ENCODE measurements at regions of chr13 and their contacts with region 1.

Region 1: DNA sequence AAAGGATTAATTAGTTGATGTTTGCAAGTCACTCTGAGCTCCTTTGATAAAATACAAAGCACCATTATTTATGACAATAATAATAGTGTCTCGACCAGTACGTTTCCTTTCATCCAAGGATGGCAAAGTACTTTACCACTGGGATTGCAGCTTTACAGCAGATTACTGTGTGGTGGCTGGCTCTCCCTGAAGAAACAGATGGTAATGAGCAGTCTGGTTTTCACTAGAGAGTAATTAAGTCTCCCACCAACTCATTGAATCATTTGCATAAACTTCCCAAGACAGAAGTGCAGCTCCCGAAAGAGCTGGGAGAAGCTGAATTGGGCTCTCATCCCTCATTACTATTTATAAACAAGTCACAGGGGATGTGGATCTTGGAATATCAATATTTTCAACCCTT is 48.7 kb downstream of the KLF5 start:
- DNase-seq: no peak
- H3K4me3 Mint-ChIP-seq: peak overlapping the region; percentile 30
- H3K27ac Mint-ChIP-seq: peak overlapping the region; percentile 90
- H3K4me1 Mint-ChIP-seq: peaks cover 21% of the 10 kb centered on the region
- H3K27me3 Mint-ChIP-seq: no peaks in the 10 kb centered on the region
- CTCF ChIP-seq: no peak

Region 2: DNA sequence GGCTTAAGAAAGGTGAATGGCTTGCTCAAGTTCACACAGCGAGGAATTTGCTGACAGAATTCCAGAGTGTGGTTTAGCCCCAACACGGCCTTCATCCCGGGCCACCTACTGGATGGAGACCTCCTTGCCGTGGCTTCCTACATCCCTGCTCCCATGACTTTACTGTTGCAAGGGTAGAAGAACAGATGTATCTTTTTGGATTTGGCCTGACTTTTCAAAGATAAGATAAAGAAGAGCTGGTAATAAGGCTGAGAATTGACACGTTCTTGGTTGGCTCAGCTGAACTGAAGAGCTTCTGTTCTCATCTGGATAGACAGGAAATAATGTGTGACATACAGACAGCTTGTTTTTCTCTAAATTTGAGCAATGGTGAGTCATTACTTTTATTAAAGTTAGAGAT is 64.4 kb after region 1 on chr13:
- CTCF ChIA-PET with region 1: no interaction called
- intact Hi-C with region 1: loop called (anchors 2 kb)
- DNase-seq: no peak
- H3K4me3 Mint-ChIP-seq: no peak overlapping the region
- H3K27ac Mint-ChIP-seq: peak overlapping the region; percentile 68
- H3K4me1 Mint-ChIP-seq: peaks cover 20% of the 10 kb centered on the region
- H3K27me3 Mint-ChIP-seq: no peaks in the 10 kb centered on the region
- CTCF ChIP-seq: no peak

Region 3: GRCh38 chr13:73198991-73199411 is 91.5 kb after region 1 on chr13:
- CTCF ChIA-PET with region 1: interaction called, 3 read pairs
- intact Hi-C with region 1: loop called (anchors 10 kb)
- DNase-seq: no peak
- H3K4me3 Mint-ChIP-seq: no peak overlapping the region
- H3K27ac Mint-ChIP-seq: peak overlapping the region; percentile 84
- H3K4me1 Mint-ChIP-seq: peaks cover 11% of the 10 kb centered on the region
- H3K27me3 Mint-ChIP-seq: no peaks in the 10 kb centered on the region
- CTCF ChIP-seq: no peak